Endothelial cell of umbilical vein (primary cell): ENCODE measurements at regions of chr20 and their contacts with region 1.

Region 1: DNA sequence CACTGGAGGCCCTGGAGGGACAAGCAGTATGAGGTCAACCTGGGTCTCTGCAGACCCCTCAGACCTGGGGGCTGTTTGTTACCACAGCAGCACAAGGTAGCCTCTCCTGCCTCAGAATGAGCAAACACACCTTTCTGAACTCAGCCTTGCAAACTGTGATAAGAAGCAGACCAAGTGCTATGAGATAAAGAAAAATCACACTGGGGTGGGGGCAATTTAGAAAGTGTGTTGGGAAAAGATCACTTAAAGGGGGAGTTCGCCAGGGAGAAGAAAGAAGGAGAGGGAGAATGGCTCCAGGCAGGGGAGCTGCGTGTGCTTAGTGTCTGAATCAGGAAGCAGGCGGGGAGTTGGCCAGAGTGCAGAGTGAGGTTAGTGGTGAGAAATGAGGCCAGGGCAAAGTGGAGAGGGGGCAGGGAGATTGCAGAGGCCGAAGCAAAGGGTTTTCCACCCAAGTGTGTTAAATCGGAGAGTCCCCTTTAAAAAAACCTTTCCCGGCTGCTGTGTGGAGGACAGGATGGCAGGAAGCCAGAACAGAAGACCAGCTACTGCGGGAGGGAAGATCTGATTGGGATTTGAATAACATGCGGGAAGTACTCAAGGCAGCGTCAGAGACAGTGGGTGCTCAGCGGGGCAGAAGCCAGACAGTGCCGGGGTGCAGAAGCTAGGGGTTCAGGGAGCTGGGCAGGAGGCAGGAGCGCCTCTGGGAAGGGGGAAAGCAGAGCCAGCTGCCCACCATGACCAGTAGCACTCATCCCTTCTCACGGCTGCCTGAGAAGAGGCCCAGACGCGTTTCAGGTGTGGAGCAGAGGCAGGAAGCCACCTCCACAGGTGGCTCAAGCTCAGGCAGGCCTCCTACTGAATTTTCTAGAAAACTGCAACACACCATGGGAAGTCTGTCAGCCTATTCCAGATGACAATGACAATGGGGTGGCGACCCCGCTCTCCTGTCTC is 9.0 kb downstream of the ADA start:
- DNase-seq: peak; percentile 89
- H3K4me3 ChIP-seq: no peak overlapping the region
- H3K27ac ChIP-seq: peak overlapping the region; percentile 98
- H3K4me1 ChIP-seq: peaks cover 48% of the 10 kb centered on the region
- H3K27me3 ChIP-seq: no peaks in the 10 kb centered on the region
- CTCF ChIP-seq: no peak
- POLR2A ChIP-seq: peak; percentile 21

Region 2: DNA sequence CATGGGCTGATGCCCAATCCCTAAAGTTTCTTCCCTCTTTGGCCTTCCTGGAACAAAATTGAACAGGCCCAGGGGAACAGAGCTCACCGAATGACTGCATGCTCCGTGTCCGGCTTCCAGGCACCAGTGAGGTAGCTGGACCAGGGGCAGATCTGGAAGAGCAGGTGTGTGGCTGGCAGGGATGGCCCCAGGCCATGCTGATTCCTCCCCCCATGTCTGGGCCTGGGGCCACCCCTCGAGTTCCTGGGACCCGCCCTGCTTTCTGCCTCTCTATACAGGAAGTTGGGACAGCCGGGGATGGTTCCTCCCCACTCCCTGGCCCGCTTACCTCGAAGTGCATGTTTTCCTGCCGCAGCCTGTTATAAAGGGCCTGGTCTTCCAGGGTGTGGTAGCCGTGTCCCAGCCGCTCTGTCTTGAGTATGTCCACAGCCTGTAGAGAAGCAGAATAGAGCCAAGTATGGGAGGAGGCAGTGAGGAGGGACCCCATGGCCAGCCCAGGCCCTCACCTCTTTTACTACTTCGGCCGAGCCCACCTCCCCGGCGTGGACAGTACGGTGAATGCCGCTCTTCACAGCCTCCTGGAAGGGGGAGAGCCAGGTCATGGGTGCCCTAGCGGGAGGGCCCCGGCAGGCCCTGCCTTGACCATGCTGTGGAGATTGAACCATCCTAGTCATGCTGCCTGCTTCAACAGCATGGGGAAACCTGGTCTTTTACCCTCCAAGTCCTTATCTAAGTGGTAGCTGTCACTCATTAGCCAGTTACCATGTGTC is 19.8 kb before region 1 on chr20:
- CTCF ChIA-PET with region 1: no interaction called
- POLR2A ChIA-PET with region 1: no interaction called
- dilution Hi-C with region 1: no loop called
- intact Hi-C with region 1: loop called (anchors 2 kb)
- DNase-seq: no peak
- H3K4me3 ChIP-seq: no peak overlapping the region
- H3K27ac ChIP-seq: no peak overlapping the region
- H3K4me1 ChIP-seq: no peaks in the 10 kb centered on the region
- H3K27me3 ChIP-seq: no peaks in the 10 kb centered on the region
- CTCF ChIP-seq: no peak
- POLR2A ChIP-seq: no peak

Region 3: DNA sequence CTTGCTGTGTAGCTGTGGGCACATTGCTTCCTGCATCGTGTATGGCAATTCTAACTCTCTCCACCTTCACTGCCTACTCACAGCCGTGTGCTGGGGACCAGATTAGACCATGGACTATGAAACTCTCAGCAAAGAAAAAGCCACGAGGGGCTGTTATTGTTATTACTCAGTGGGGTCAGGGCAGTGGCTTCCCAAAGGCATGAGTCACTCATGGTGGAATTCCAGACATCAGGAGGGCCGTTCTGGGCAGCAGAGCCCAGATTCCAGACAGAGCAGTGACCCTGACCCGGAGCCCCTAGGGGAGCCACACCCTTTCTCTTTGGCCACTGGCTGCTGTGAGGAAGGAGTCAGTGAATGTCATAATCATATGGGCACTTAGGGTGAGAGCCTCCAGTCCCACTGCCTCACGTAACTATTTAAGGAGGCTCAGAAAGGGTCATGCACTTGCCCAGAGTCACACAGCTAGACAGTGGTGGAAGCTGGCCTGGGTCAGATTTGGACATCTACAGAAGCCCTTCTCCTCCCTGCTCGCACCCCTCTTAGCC is 50.5 kb after region 1 on chr20:
- CTCF ChIA-PET with region 1: no interaction called
- POLR2A ChIA-PET with region 1: no interaction called
- dilution Hi-C with region 1: no loop called
- intact Hi-C with region 1: loop called (anchors 2 kb)
- DNase-seq: peak; percentile 98
- H3K4me3 ChIP-seq: no peak overlapping the region
- H3K27ac ChIP-seq: peak overlapping the region; percentile 93
- H3K4me1 ChIP-seq: peaks cover 33% of the 10 kb centered on the region
- H3K27me3 ChIP-seq: no peaks in the 10 kb centered on the region
- CTCF ChIP-seq: no peak
- POLR2A ChIP-seq: no peak